Activated CD4-positive, alpha-beta memory T cell treated with anti-CD3 and anti-CD28 coated beads, Interleukin-2, amount 10 ng/mL, durations not matched to agents 7 days and 5 days (primary cell): ENCODE measurements at regions of chr1 and their contacts with region 1.

Region 1: GRCh38 chr1:222713091-222713961 is 962 bp downstream of the BROX start:
- DNase-seq: peak; percentile 90
- H3K4me3 Mint-ChIP-seq: peak overlapping the region; percentile 99
- H3K27ac Mint-ChIP-seq: peak overlapping the region; percentile 99
- H3K4me1 Mint-ChIP-seq: peaks cover 54% of the 10 kb centered on the region
- H3K27me3 Mint-ChIP-seq: no peaks in the 10 kb centered on the region

Region 2: GRCh38 chr1:222589462-222590302 is 123.6 kb before region 1 on chr1 and contains the start of gene TAF1A:
- CTCF ChIA-PET with region 1: interaction called, 5 read pairs
- POLR2A ChIA-PET with region 1: interaction called, 11 read pairs
- DNase-seq: peak; percentile 89
- H3K4me3 Mint-ChIP-seq: peak within 1 kb of the TSS; percentile 93
- H3K27ac Mint-ChIP-seq: peak within 1 kb of the TSS; percentile 87
- H3K4me1 Mint-ChIP-seq: peaks cover 42% of the 10 kb centered on the region
- H3K27me3 Mint-ChIP-seq: no peaks in the 10 kb centered on the region
- total RNA-seq, gene TAF1A: 9.1 to 10.0 TPM

Region 3: DNA sequence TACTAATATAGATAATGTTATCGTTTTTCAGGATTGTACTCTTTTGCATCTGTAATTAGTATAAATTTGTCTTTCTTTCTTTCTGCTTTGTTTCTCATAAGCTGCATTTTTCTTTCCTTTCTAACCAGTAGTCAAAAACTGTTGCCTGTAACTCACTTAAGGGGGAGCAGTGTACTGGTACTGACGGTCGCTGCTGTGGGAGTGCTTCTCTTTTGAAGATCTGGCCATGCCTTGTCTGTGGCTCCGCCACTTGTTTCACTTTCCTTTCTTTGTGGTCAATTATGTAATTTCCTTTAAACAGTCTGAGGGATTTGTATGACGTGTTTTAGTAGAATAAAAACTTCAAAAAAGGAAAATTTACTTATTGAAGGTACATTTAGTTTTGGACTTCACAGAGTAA is 58.5 kb before region 1 on chr1:
- CTCF ChIA-PET with region 1: interaction called, 11 read pairs
- POLR2A ChIA-PET with region 1: interaction called, 43 read pairs
- DNase-seq: peak; percentile 74
- H3K4me3 Mint-ChIP-seq: no peak overlapping the region
- H3K27ac Mint-ChIP-seq: peak overlapping the region; percentile 73
- H3K4me1 Mint-ChIP-seq: peaks cover 56% of the 10 kb centered on the region
- H3K27me3 Mint-ChIP-seq: no peaks in the 10 kb centered on the region

Region 4: DNA sequence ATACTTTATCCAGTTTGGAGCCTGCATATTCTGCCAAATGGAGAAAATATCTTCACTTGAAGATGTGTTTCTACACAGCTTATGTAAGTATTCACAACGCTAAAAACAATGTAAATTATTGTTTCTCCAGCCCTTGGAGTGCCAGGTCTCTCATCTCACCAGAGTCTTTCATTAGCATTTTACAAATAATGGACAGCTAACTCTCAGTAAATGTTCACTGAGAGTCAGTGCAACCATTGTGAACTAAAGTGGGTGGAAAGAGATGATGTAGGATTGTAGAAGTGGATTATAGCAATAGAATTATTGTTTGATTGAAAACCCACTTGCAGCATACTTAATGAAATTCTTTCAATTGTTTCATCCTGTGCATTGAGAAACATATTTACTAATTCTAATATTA is 15.4 kb after region 1 on chr1:
- CTCF ChIA-PET with region 1: no interaction called
- POLR2A ChIA-PET with region 1: interaction called, 16 read pairs
- DNase-seq: no peak
- H3K4me3 Mint-ChIP-seq: no peak overlapping the region
- H3K27ac Mint-ChIP-seq: no peak overlapping the region
- H3K4me1 Mint-ChIP-seq: peaks cover 13% of the 10 kb centered on the region
- H3K27me3 Mint-ChIP-seq: no peaks in the 10 kb centered on the region